ENCODE measurements at regions of chr3 and their contacts with region 1.

Region 1: GRCh38 chr3:43638594-43639447 is 17.0 kb upstream of the ANO10 start:
- DNase-seq: peak; percentile 58
- H3K4me3 ChIP-seq: no peak overlapping the region
- H3K27ac ChIP-seq: no peak overlapping the region
- H3K4me1 ChIP-seq: peaks cover 9% of the 10 kb centered on the region
- H3K27me3 ChIP-seq: no peaks in the 10 kb centered on the region
- CTCF ChIP-seq: peak; percentile 51 to 57

Region 2: DNA sequence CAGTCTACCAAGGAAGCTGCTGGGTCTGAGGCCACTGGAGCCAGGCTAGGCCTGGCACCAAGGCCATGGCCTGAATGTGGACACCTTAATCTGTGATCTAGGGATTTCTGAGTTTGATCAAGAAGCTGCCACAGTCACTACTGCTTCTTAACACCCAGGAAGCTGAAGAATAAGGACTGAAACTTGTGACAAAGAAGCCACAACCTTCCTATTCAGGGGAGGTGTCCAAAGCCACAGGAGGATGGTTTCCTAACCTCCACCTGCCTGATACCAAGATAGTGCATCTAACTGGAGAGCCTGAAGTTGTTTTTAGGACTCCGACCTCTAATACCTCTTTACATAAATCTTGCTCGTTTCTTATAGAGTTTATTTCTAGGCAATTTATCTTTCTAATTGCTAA is 11.5 kb before region 1 on chr3:
- CTCF ChIA-PET with region 1: interaction called, 12 read pairs
- dilution Hi-C with region 1: no loop called
- in situ Hi-C with region 1: no loop called
- intact Hi-C with region 1: no loop called
- DNase-seq: no peak
- H3K4me3 ChIP-seq: no peak overlapping the region
- H3K27ac ChIP-seq: no peak overlapping the region
- H3K4me1 ChIP-seq: peaks cover 12% of the 10 kb centered on the region
- H3K27me3 ChIP-seq: no peaks in the 10 kb centered on the region
- CTCF ChIP-seq: no peak

Region 3: GRCh38 chr3:43690400-43691119 is 51.7 kb after region 1 on chr3 and contains the start of gene ABHD5:
- CTCF ChIA-PET with region 1: no interaction called
- dilution Hi-C with region 1: no loop called
- in situ Hi-C with region 1: no loop called
- intact Hi-C with region 1: no loop called
- DNase-seq: peak; percentile 95
- H3K4me3 ChIP-seq: peak within 1 kb of the TSS; percentile 74 to 87 (median 85)
- H3K27ac ChIP-seq: peak within 1 kb of the TSS; percentile 55
- H3K4me1 ChIP-seq: peaks cover 42% of the 10 kb centered on the region
- H3K27me3 ChIP-seq: no peaks in the 10 kb centered on the region
- CTCF ChIP-seq: peak in 1 of 2 donors; percentile 29
- total RNA-seq, gene ABHD5: 37.9 to 59.8 TPM

Region 4: DNA sequence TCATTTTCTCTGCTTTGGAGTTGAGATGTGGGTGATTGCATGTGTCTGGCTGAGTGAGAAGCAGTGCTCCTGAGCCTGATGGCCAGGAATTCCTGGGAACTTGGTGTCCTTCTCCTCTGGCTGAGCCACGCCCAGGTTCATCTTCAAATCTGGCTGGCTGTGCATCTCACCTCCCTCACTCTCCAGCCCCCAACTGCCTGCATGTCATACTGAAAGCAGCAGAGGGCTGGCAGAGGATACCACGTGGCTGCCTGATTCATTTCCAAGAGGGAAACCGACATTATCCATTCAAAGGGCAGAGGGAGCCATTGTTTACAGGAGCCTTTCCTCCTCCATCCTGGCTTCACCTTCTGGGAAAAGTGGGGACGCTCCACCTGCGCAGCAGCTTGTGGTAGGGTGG is 109.4 kb after region 1 on chr3:
- CTCF ChIA-PET with region 1: no interaction called
- dilution Hi-C with region 1: loop called (anchors 5 kb)
- in situ Hi-C with region 1: no loop called
- intact Hi-C with region 1: no loop called
- DNase-seq: no peak
- H3K4me3 ChIP-seq: no peak overlapping the region
- H3K27ac ChIP-seq: no peak overlapping the region
- H3K4me1 ChIP-seq: peaks cover 11% of the 10 kb centered on the region
- H3K27me3 ChIP-seq: no peaks in the 10 kb centered on the region
- CTCF ChIP-seq: no peak

Region 5: GRCh38 chr3:44240061-44240460 is 601.2 kb after region 1 on chr3:
- CTCF ChIA-PET with region 1: no interaction called
- dilution Hi-C with region 1: no loop called
- in situ Hi-C with region 1: no loop called
- intact Hi-C with region 1: no loop called
- DNase-seq: peak; percentile 16
- H3K4me3 ChIP-seq: no peak overlapping the region
- H3K27ac ChIP-seq: no peak overlapping the region
- H3K4me1 ChIP-seq: no peaks in the 10 kb centered on the region
- H3K27me3 ChIP-seq: peaks cover 5% of the 10 kb centered on the region
- CTCF ChIP-seq: no peak